ENCODE measurements at regions of chr14 and their contacts with region 1.

Region 1: DNA sequence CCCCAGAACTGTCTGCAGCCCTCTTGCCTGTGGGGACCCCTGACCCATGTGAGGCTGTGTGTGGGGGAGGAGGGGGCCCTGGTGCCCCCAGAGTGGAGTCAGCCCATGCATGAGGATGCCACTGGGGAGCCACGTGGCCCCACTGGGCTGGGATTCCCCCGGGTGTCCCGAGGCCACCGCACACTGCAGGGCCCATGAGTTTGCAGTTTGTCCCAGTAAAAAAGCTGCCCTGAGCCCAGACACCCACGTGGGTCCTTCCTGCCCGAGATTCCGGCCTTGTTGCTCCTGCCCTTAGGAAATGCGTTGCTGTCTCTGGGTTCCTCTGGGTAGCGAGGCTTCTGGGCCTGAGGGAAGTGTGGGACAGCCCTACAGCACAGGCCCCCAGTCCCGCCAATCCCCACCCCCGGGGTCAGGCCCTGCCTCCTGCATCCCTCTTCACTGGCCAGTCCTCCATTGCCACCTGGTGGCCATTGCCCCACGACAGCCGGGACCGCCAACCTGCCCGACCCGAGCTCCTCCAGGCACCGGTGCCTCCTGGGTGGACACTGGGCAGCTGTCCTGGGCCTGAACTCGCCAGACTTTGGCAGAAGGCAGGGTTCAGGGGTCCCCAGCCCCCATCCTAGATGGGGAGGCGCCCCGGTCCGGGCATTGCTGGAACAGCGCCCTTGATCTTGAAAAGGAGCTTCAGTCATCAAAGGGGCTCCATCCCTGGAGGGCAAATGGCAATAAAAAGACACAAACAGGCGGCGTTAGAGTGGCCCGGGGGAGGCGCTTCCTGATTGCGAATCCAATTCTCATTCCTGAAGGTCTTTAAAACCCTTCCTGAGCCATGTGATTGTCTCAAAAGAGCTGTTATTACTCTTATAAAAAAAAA is 15.6 kb upstream of the C14orf180 start:
- DNase-seq: peak; percentile 77 to 95
- ATAC-seq: peak; percentile 72 to 92
- H3K4me3 ChIP-seq: no peak overlapping the region
- H3K27ac ChIP-seq: peak overlapping the region in 1 of 2 experiments; percentile 56; a peak in 3 of 6 replicates
- H3K4me1 ChIP-seq: peaks cover 9% of the 10 kb centered on the region; the same call in 2 of the 3 replicates
- CTCF ChIP-seq: peak; percentile 84
- EP300 ChIP-seq: no peak
- POLR2A ChIP-seq: no peak
- RAD21 ChIP-seq: peak; percentile 95

Region 2: DNA sequence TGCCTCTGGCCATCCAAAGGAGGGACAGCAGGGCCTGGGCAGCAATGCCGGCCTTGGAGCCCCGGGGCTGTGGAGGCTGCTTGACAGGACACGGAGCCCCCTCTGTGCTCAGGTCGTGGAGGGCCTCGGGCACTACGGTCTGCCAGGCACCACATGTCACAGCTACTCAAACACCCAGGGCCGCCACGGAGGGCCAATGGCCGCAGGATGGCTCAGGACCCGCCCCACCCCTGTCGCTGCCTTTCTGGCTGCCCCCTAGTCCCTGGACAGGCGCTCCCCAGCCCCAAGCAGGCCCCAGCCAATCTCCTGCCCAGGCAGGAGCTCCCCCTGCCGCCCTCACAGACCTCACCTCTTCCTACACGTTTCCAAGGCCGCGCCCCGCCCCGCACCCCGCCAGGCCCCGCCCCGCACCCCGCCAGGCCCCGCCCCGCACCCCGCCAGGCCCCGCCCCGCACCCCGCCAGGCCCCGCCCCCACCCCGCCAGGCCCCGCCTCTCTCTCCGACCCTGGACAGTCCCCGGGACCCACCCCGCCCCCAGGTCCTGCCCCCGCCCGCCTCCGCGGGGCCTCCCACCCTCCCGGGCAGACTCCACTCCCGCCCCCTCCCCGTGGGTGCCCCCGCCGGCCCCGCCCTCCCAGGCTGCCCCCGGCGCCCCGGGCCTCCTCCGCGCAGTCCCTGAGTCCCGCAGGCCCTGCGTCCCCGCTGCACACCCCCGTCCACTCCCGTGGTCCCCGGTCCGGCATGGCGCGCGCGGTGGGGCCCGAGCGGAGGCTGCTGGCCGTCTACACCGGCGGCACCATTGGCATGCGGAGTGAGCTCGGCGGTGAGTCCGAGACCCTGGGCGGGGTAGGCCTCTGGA is 478.7 kb before region 1 on chr14 and contains the start of gene ASPG:
- CTCF ChIA-PET with region 1: interaction called, 112 read pairs
- POLR2A ChIA-PET with region 1: no interaction called
- DNase-seq: peak; percentile 35 to 44
- ATAC-seq: peak; percentile 28 to 59; a peak in 5 of 6 replicates
- H3K4me3 ChIP-seq: peak within 1 kb of the TSS; percentile 40
- H3K27ac ChIP-seq: peak within 1 kb of the TSS in 1 of 2 experiments; percentile 67; a peak in 3 of 6 replicates
- H3K4me1 ChIP-seq: no peaks in the 10 kb centered on the region; the same call in 2 of the 3 replicates
- CTCF ChIP-seq: no peak
- EP300 ChIP-seq: no peak
- POLR2A ChIP-seq: no peak
- RAD21 ChIP-seq: no peak
- polyA plus RNA-seq, gene ASPG: not detected in 2 replicates

Region 3: DNA sequence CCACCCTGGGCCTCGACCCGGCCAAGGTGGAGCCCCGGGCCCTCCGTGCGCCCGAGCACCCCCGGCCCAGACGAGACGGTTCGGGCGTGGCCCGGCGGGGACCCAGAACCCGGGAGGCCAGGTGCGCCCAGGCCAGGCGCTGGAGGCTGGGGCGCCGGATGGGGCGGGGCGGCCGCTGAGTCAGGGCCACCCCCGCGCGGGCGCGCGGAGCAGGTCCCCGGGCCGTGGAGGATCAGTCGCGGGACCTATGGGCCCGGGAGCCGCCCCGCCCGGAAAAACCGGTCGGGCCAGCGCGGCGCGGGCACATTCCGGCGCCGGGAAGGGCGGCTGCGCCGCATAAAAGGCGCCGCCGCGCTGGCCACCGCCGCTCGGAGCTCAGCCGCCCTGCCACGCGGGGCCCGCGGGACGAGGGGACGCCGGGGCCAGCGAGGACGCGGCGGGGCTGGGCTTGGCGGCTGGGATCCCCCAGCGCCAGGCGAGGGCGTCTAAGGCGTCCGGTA is 447.2 kb before region 1 on chr14:
- CTCF ChIA-PET with region 1: interaction called, 21 read pairs
- POLR2A ChIA-PET with region 1: no interaction called
- DNase-seq: no peak
- ATAC-seq: no peak
- H3K4me3 ChIP-seq: peak overlapping the region; percentile 54
- H3K27ac ChIP-seq: peak overlapping the region; percentile 31 to 72; a peak in 5 of 6 replicates
- H3K4me1 ChIP-seq: peaks cover 5% of the 10 kb centered on the region; the same call in 2 of the 3 replicates
- CTCF ChIP-seq: no peak
- EP300 ChIP-seq: no peak
- POLR2A ChIP-seq: no peak
- RAD21 ChIP-seq: no peak

Region 4: GRCh38 chr14:104144911-104145745 is 418.9 kb before region 1 on chr14:
- CTCF ChIA-PET with region 1: interaction called, 50 read pairs
- POLR2A ChIA-PET with region 1: no interaction called
- DNase-seq: no peak
- ATAC-seq: no peak
- H3K4me3 ChIP-seq: no peak overlapping the region
- H3K27ac ChIP-seq: no peak overlapping the region
- H3K4me1 ChIP-seq: peaks cover 6% of the 10 kb centered on the region; the same call in 1 of the 3 replicates
- CTCF ChIP-seq: no peak
- EP300 ChIP-seq: no peak
- POLR2A ChIP-seq: no peak
- RAD21 ChIP-seq: no peak

Region 5: DNA sequence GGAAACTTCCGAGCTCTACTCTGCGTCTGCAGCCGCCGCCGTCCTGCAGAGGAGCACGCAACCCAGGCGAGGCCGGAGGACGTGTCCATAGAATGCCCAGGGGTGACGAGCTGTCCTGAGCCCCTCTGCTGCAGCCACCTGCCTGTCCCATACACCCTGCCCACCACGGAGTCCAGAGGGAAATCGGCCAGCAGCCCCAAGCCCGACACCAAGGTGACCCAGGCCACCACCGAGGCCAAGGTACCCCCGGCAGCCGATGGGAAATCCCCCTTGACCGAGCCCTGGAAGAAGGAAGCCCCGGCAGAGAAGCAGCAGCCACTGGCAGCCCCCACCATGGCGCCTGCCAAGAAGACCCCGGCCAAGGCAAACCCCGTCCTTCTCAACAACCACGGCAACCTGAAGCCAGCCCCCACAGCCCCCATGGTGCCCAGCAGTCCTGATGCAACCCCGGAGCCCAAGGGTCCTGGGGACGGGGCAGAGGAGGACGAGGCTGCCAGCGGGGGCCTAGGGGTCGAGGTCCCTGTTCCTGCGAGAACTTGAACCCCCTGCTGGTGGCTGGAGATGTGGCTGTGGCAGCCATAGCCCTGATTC is 113.1 kb before region 1 on chr14:
- CTCF ChIA-PET with region 1: no interaction called
- POLR2A ChIA-PET with region 1: no interaction called
- DNase-seq: no peak
- ATAC-seq: no peak
- H3K4me3 ChIP-seq: no peak overlapping the region
- H3K27ac ChIP-seq: no peak overlapping the region
- H3K4me1 ChIP-seq: no peaks in the 10 kb centered on the region
- CTCF ChIP-seq: no peak
- EP300 ChIP-seq: no peak
- POLR2A ChIP-seq: no peak
- RAD21 ChIP-seq: no peak

Region 6: DNA sequence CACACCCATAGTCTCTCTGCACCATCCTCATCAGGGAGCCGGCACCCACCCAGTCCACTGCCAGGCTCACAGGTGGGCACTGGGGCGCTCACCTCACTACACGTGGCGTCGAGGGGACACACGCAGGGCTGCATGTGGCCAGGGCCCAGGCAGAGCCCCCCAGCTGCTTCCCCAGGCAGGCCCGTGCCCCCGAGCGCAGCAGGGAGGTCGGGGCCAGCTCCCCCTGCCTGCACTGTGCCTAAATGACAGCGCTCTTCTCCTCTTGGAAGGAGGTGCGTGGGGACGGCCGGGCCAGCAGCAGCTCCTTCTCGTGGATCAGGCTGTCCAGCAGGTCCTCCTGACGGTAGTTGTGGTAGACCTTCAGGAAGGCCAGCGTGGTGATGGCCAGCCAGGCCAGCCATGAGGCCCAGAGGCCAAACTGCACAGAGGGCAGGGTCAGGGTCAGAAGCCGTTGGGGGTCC is 29.3 kb after region 1 on chr14:
- CTCF ChIA-PET with region 1: interaction called, 11 read pairs
- POLR2A ChIA-PET with region 1: no interaction called
- DNase-seq: no peak
- ATAC-seq: peak in 1 of 2 experiments; percentile 49; a peak in 2 of 6 replicates
- H3K4me3 ChIP-seq: no peak overlapping the region
- H3K27ac ChIP-seq: no peak overlapping the region
- H3K4me1 ChIP-seq: no peaks in the 10 kb centered on the region
- CTCF ChIP-seq: no peak
- EP300 ChIP-seq: no peak
- POLR2A ChIP-seq: no peak
- RAD21 ChIP-seq: no peak